Left ventricle myocardium inferior (tissue), 1 donor: ENCODE measurements at regions of chr5 and their contacts with region 1.

Region 1: GRCh38 chr5:149387081-149387631 is 8.1 kb upstream of the IL17B start:
- DNase-seq: no peak
- H3K4me3 ChIP-seq: no peak overlapping the region
- H3K27ac ChIP-seq: peak overlapping the region; percentile 94
- H3K4me1 ChIP-seq: peaks cover 86% of the 10 kb centered on the region
- H3K27me3 ChIP-seq: no peaks in the 10 kb centered on the region
- CTCF ChIP-seq: no peak

Region 2: GRCh38 chr5:149422366-149423048 is 35.4 kb after region 1 on chr5:
- intact Hi-C with region 1: loop called (anchors 5 kb)
- DNase-seq: peak; percentile 81
- H3K4me3 ChIP-seq: peak overlapping the region; percentile 67
- H3K27ac ChIP-seq: peak overlapping the region; percentile 95
- H3K4me1 ChIP-seq: peaks cover 98% of the 10 kb centered on the region
- H3K27me3 ChIP-seq: no peaks in the 10 kb centered on the region
- CTCF ChIP-seq: no peak